Activated naive CD8-positive, alpha-beta T cell treated with anti-CD3 and anti-CD28 coated beads, Interleukin-2, amount 10 ng/mL, durations not matched to agents 7 days and 5 days (primary cell): ENCODE measurements at regions of chr1 and their contacts with region 1.

Region 1: GRCh38 chr1:247390116-247390791 is 25.7 kb upstream of the NLRP3 start:
- DNase-seq: peak; percentile 76
- ATAC-seq: peak; percentile 99
- H3K4me3 Mint-ChIP-seq: peak overlapping the region; percentile 74
- H3K27ac Mint-ChIP-seq: peak overlapping the region; percentile 85
- H3K4me1 Mint-ChIP-seq: peaks cover 10% of the 10 kb centered on the region
- H3K27me3 Mint-ChIP-seq: peaks cover 2% of the 10 kb centered on the region

Region 2: GRCh38 chr1:247401310-247402119 is 11.3 kb after region 1 on chr1:
- POLR2A ChIA-PET with region 1: no interaction called
- DNase-seq: no peak
- ATAC-seq: no peak
- H3K4me3 Mint-ChIP-seq: no peak overlapping the region
- H3K27ac Mint-ChIP-seq: no peak overlapping the region
- H3K4me1 Mint-ChIP-seq: no peaks in the 10 kb centered on the region
- H3K27me3 Mint-ChIP-seq: peaks cover 8% of the 10 kb centered on the region

Region 3: GRCh38 chr1:247415423-247416361 is 25.4 kb after region 1 on chr1 and contains the start of gene NLRP3:
- POLR2A ChIA-PET with region 1: interaction called, 13 read pairs
- DNase-seq: peak; percentile 58
- ATAC-seq: peak; percentile 86
- H3K4me3 Mint-ChIP-seq: peak within 1 kb of the TSS; percentile 86
- H3K27ac Mint-ChIP-seq: peak within 1 kb of the TSS; percentile 86
- H3K4me1 Mint-ChIP-seq: peaks cover 42% of the 10 kb centered on the region
- H3K27me3 Mint-ChIP-seq: no peaks in the 10 kb centered on the region
- total RNA-seq, gene NLRP3: 7.0 to 8.9 TPM

Region 4: GRCh38 chr1:247465796-247466195 is 75.5 kb after region 1 on chr1:
- POLR2A ChIA-PET with region 1: no interaction called
- DNase-seq: no peak
- ATAC-seq: no peak
- H3K4me3 Mint-ChIP-seq: no peak overlapping the region
- H3K27ac Mint-ChIP-seq: no peak overlapping the region
- H3K4me1 Mint-ChIP-seq: no peaks in the 10 kb centered on the region
- H3K27me3 Mint-ChIP-seq: peaks cover 2% of the 10 kb centered on the region